ENCODE measurements at regions of chr1 and their contacts with region 1.

Region 1: DNA sequence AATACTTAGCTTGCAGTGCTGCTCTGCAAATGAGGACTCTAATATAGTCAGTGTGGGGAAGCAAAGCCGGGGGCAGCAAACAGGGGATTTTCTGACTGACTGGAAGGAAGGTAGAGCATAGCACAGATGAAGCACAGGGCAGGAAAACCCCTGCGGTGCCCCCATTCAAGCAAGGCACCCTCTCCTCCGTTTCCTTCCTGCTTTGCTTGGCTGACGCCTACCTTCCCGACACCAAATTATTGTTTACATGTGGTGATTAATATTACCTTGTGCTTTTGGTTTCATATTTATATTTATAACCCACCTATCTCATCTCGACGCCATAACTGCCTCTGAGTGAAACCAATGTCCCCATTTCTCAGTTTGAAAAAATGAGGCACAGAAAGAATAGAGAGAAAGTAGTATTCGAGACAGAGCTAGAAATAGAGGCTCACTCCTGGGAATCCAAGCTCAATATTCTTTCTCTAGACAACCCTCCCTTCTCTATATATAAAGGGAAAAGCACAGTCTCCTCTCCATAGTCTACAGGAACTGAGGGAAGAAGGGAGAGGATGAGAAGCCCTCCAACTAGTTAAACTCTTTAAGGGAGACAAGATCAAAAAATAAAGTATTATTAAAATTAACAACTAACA is 41.3 kb downstream of the PIK3C2B start:
- DNase-seq: peak; percentile 46 to 78
- H3K4me3 ChIP-seq: no peak overlapping the region
- H3K27ac ChIP-seq: peak overlapping the region; percentile 83 to 93 (median 88)
- H3K4me1 ChIP-seq: peaks cover 18 to 62% (median 42%) of the 10 kb centered on the region in 4 donors
- H3K27me3 ChIP-seq: no peaks in the 10 kb centered on the region
- CTCF ChIP-seq: no peak
- EP300 ChIP-seq: no peak
- POLR2A ChIP-seq: no peak

Region 2: DNA sequence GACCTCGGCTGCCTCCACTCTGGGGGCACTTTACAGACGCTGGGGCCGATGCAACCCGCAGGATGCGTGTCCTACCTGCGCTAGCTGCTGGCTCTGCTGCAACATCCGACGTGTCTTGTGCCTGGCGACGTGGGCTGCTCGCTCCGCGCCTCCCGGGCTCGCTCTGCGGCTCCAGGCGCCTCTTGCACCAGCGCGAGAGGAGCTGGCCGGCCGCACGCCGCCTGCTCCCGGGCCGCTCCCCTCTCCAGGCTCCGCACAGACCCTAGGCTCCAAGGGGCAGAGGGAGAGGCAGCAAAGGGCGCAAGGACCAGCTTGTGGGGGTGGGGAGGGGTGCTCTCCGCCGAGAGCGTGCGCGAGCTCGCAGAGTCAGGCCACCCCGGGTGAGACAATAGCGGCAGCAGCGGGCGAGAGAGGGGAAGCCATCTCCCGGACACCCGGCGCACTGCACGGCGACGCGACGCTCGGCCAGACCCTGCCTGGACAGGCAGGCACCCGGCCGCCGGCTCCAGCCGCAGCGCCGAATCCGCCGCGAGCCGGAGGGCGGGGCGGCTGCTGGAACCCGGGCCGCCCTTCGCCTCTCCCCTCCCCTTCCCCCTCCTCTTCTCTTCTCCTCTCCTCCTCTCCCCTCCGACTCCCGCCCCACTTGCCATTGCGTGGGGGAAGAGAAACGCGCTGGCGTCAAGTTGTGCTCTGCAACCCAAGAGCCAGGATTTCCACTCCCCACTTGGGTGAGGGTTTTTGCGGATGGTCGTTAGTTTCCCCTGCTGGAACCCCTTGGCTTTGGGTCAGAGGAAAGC is 41.2 kb after region 1 on chr1 and contains the start of gene PIK3C2B:
- intact Hi-C with region 1: loop called (anchors 5 kb)
- DNase-seq: peak; percentile 84 to 96
- H3K4me3 ChIP-seq: peak within 1 kb of the TSS; percentile 63 to 82 (median 72)
- H3K27ac ChIP-seq: peak within 1 kb of the TSS; percentile 88 to 99 (median 96)
- H3K4me1 ChIP-seq: peaks cover 18 to 50% (median 35%) of the 10 kb centered on the region in 4 donors
- H3K27me3 ChIP-seq: no peaks in the 10 kb centered on the region
- CTCF ChIP-seq: peak in 5 of 7 experiments; percentile 31 to 60 (median 47)
- EP300 ChIP-seq: no peak
- POLR2A ChIP-seq: peak in 1 of 4 donors; percentile 4
- total RNA-seq, gene PIK3C2B: 16.1 to 129 (median 65.3) TPM

Region 3: DNA sequence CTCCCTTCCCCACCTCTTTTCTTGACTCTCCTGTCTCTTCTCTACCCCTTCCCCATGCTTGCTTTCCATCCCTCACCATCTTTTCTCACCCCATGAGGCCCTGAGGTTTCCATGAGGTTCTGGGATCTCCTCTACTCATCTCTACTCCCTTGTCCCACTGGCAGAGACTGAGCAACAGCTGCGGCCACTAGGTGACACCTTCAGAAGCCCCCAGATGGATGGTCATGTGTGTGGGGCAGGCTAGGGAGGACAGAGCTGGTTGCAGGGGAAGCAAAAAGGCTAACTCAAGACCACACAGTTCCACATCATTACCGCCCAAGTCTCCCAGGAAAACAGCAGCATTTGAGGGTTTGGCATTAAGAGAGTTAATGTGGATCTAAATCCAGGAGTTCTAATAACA is 187.3 kb after region 1 on chr1:
- intact Hi-C with region 1: no loop called
- DNase-seq: no peak
- H3K4me3 ChIP-seq: no peak overlapping the region
- H3K27ac ChIP-seq: no peak overlapping the region
- H3K4me1 ChIP-seq: peaks cover 0 to 14% (median 4%) of the 10 kb centered on the region in 4 donors
- H3K27me3 ChIP-seq: peaks cover 0 to 4% (median 0%) of the 10 kb centered on the region in 3 donors
- CTCF ChIP-seq: no peak
- EP300 ChIP-seq: no peak
- POLR2A ChIP-seq: no peak

Region 4: DNA sequence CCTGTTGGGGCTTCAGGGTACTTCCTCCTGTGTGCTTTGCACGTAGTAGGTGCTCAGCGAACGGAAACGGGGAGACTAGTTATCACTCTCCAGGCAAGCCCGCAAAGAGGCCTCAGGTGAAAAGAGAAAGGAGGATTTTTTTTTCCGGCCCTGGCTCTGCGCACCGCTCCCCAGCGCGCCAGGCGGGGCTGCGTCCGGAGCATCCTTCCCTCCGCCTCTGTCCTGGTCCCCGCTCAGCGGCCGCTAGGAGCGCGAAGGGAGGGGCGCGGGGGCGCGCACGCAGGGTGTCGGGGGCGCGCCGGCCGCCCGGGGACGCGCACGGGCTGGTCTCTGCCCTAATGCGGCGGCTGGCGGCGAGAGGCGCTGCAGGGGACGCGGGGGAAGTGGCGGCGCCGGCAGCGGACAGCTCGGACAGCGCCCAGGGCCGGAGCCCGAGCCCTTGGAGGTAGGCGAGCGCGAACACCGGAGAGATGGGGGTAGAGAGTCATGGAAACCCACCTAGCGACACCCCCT is 375.1 kb after region 1 on chr1:
- intact Hi-C with region 1: no loop called
- DNase-seq: peak; percentile 48 to 79
- H3K4me3 ChIP-seq: peak overlapping the region; percentile 47 to 55 (median 50)
- H3K27ac ChIP-seq: peak overlapping the region in 4 of 5 donors; percentile 22 to 85 (median 52)
- H3K4me1 ChIP-seq: peaks cover 8 to 26% (median 15%) of the 10 kb centered on the region in 4 donors
- H3K27me3 ChIP-seq: peaks cover 0 to 67% (median 23%) of the 10 kb centered on the region in 3 donors
- CTCF ChIP-seq: peak in 1 of 7 experiments; percentile 8
- EP300 ChIP-seq: no peak
- POLR2A ChIP-seq: no peak

Measured in stomach (tissue), 19 donors.